Aorta (tissue), 5 donors: ENCODE measurements at regions of chr20 and their contacts with region 1.

Region 1: GRCh38 chr20:1965520-1966351 is 28.1 kb downstream of the PDYN start:
- DNase-seq: peak; percentile 77 to 94
- ATAC-seq: peak; percentile 84
- H3K4me3 ChIP-seq: no peak overlapping the region
- H3K27ac ChIP-seq: no peak overlapping the region
- H3K4me1 ChIP-seq: no peaks in the 10 kb centered on the region
- H3K27me3 ChIP-seq: no peaks in the 10 kb centered on the region

Region 2: GRCh38 chr20:1764136-1765033 is 201.4 kb before region 1 on chr20:
- intact Hi-C with region 1: loop called in 1 of 2 experiments (anchors 5 kb)
- DNase-seq: peak; percentile 86 to 88
- ATAC-seq: peak; percentile 85
- H3K4me3 ChIP-seq: no peak overlapping the region
- H3K27ac ChIP-seq: no peak overlapping the region
- H3K4me1 ChIP-seq: no peaks in the 10 kb centered on the region
- H3K27me3 ChIP-seq: no peaks in the 10 kb centered on the region

Region 3: GRCh38 chr20:1894951-1895673 is 70.6 kb before region 1 on chr20 and contains the start of gene SIRPA:
- intact Hi-C with region 1: no loop called
- DNase-seq: peak; percentile 80 to 91
- ATAC-seq: peak; percentile 70
- H3K4me3 ChIP-seq: peak within 1 kb of the TSS; percentile 67 to 92
- H3K27ac ChIP-seq: peak within 1 kb of the TSS; percentile 73 to 95
- H3K4me1 ChIP-seq: peaks cover 0 to 4% of the 10 kb centered on the region in 2 donors
- H3K27me3 ChIP-seq: no peaks in the 10 kb centered on the region
- total RNA-seq, gene SIRPA: 41.4 to 62.9 TPM

Region 4: GRCh38 chr20:2151858-2152281 is 186.1 kb after region 1 on chr20:
- intact Hi-C with region 1: no loop called
- DNase-seq: peak; percentile 44 to 69
- ATAC-seq: peak; percentile 50
- H3K4me3 ChIP-seq: no peak overlapping the region
- H3K27ac ChIP-seq: no peak overlapping the region
- H3K4me1 ChIP-seq: no peaks in the 10 kb centered on the region
- H3K27me3 ChIP-seq: no peaks in the 10 kb centered on the region